Activated CD4-positive, alpha-beta T cell treated with anti-CD3 and anti-CD28 coated beads, Interleukin-2, amount 10 ng/mL, durations not matched to agents 24 days and 14 days (primary cell): ENCODE measurements at regions of chr17 and their contacts with region 1.

Region 1: DNA sequence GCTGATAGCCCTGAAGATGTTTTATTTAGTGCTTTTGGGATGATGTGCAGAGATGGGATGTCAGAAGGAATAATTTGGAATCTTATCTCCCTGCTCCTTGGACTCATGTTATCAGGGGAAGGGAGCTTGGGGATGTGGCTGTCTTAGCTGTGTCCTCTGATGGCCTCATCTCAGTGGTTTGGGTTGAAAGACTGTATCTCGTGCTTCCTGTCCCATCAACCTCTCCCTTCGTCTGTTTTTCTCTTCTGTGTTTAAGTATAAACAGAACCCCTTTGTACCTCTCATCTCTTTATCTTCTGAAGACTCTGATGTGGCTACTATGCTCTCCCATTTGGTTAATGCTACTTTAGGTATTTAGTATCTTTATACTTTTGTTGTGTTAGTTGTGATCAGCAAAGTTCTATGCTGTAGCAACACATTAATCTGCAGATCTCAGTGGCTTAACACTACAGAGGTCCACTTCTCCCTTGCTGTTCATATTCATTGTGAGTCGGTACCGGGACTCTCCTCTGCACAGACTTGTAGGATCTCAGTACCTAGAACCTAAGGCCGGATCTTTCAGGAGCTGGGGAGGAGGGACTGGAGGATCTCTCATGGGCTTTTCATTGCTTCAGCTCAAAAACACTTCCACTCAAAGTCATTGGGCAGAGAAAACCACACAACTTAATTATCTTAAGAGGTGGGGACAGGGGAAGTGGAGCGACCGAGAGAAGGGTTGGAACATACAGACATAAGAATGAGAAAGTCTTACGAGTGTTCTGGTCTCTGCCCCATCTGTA is 28.8 kb downstream of the PRKCA start:
- DNase-seq: peak; percentile 79
- H3K4me3 Mint-ChIP-seq: peak overlapping the region; percentile 80
- H3K27ac Mint-ChIP-seq: peak overlapping the region; percentile 94
- H3K4me1 Mint-ChIP-seq: peaks cover 60% of the 10 kb centered on the region
- H3K27me3 Mint-ChIP-seq: no peaks in the 10 kb centered on the region

Region 2: GRCh38 chr17:66310528-66311148 is 20.6 kb before region 1 on chr17:
- intact Hi-C with region 1: loop called (anchors 2 kb)
- DNase-seq: no peak
- H3K4me3 Mint-ChIP-seq: peak overlapping the region; percentile 77
- H3K27ac Mint-ChIP-seq: peak overlapping the region; percentile 80
- H3K4me1 Mint-ChIP-seq: peaks cover 82% of the 10 kb centered on the region
- H3K27me3 Mint-ChIP-seq: no peaks in the 10 kb centered on the region

Region 3: DNA sequence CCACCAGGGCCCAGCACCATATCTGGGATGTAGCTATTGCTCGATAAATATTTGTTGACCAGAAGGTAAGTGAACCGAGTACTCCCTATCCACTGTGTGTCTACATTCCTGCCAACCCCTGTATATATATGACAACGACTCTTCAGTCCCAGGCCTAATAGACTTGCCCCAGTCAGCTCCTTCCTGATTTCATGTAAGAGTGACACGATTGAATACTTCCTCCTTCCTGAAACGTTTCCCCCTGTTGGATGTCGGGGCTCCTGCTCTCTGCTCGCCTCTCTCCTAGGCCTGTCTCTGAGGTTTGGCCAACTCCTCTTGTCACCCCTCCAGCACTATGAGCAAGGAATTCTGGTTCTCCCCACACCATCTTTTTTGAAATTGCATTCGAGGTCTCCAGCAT is 150.0 kb after region 1 on chr17:
- intact Hi-C with region 1: no loop called
- DNase-seq: no peak
- H3K4me3 Mint-ChIP-seq: no peak overlapping the region
- H3K27ac Mint-ChIP-seq: no peak overlapping the region
- H3K4me1 Mint-ChIP-seq: peaks cover 18% of the 10 kb centered on the region
- H3K27me3 Mint-ChIP-seq: no peaks in the 10 kb centered on the region

Region 4: DNA sequence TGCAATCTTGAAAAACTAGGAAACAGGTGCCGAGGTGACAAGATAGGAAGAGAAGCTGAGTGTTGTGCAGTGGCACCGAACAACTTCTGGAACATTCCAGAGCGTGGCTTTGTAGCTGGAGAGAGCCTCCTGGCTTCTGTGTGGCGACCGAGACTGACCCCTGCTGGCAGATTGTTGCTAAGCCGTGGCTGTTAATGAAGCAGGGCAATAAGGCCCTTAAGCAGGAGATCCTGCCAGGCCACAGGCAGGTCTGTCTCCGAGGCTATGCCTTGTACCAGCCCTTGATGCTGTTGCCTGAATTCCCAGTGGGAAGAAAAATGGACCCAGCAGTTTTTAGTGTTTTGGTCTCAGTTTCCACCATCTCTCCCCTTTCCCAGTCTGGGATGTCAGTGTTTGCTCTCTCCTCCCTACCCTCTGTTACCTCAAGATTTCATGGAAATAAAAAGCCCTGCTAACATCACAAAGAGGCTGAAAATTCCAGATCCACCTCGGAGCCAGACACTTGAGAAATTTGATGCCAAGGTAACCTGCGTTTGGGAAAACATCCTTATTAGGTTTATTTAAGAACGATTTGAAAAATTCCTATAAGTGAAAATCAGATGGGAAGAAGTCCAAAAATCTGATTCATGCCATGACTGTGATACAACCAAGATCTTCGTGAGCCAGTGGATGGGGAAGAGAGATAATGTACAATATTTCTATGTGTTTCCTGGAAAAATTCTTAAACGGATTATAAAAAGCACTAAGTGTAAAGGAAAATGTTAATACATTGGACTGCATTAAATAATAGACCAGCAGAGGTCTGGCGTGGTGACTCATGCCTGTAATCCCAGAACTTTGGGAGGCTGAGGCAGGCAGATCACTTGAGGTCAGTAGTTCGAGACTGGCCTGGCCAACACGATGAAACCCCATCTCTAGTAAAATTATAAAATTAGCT is 236.3 kb after region 1 on chr17:
- intact Hi-C with region 1: no loop called
- DNase-seq: peak; percentile 93
- H3K4me3 Mint-ChIP-seq: no peak overlapping the region
- H3K27ac Mint-ChIP-seq: peak overlapping the region; percentile 14
- H3K4me1 Mint-ChIP-seq: peaks cover 34% of the 10 kb centered on the region
- H3K27me3 Mint-ChIP-seq: no peaks in the 10 kb centered on the region